Activated naive CD4-positive, alpha-beta T cell treated with anti-CD3 and anti-CD28 coated beads for 36 hours (primary cell): ENCODE measurements at regions of chr21 and their contacts with region 1.

Region 1: DNA sequence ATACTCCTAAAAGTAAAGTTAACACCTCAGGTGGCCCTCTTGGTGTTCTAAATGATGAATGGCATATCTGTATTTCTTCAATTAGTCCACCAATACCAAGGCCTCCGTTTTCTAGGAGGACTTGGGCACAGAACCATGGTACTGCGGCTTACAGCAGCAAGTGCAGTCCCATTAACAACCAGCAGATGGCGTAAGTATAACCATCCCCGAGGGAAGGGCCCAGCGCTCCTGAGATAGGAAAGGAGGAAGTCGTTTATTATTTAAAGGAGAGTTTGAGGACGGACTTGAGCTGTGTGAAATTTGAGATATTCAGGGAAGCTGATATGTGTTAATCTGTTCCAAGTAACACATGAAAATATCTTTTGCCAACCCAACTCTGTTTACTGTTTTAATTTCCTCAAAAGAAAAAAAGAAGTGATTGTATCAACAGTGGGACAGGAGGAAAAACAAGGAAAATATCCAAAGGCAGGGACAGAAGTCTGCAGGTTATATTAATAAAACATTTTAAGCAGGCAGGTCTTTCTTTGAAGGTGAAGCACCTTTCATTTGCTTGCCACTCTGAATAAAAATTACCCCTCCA is 37.7 kb upstream of the KCNJ15 start:
- DNase-seq: peak; percentile 78
- H3K4me3 Mint-ChIP-seq: no peak overlapping the region
- H3K27ac Mint-ChIP-seq: no peak overlapping the region
- H3K4me1 Mint-ChIP-seq: peaks cover 3% of the 10 kb centered on the region
- H3K27me3 Mint-ChIP-seq: no peaks in the 10 kb centered on the region

Region 2: DNA sequence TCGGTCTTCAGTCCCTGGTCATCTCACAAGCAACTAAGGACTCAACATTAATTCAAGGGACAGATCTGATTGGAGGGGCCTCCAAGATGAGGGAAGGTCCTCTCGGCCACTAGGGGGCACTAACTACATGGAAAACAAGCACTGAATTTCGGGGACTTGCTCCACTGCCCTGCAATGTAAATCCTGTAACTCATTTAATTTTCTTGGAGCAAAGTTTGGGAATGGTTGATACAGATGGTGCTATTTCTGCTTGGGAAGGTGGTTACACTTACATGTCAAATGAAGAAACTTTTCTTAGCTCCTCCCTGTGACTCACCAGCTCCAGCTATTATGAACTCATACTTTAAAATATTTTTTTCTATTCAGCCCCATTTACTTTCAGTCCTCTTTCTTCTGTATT is 59.8 kb before region 1 on chr21:
- CTCF ChIA-PET with region 1: interaction called, 6 read pairs
- intact Hi-C with region 1: loop called (anchors 1 kb)
- DNase-seq: peak; percentile 76
- H3K4me3 Mint-ChIP-seq: no peak overlapping the region
- H3K27ac Mint-ChIP-seq: no peak overlapping the region
- H3K4me1 Mint-ChIP-seq: no peaks in the 10 kb centered on the region
- H3K27me3 Mint-ChIP-seq: peaks cover 16% of the 10 kb centered on the region

Region 3: GRCh38 chr21:38208118-38208517 is 11.0 kb before region 1 on chr21:
- CTCF ChIA-PET with region 1: interaction called, 20 read pairs
- intact Hi-C with region 1: no loop called
- DNase-seq: no peak
- H3K4me3 Mint-ChIP-seq: no peak overlapping the region
- H3K27ac Mint-ChIP-seq: no peak overlapping the region
- H3K4me1 Mint-ChIP-seq: peaks cover 4% of the 10 kb centered on the region
- H3K27me3 Mint-ChIP-seq: peaks cover 15% of the 10 kb centered on the region

Region 4: GRCh38 chr21:38236232-38236631 is 17.1 kb after region 1 on chr21:
- CTCF ChIA-PET with region 1: interaction called, 34 read pairs
- intact Hi-C with region 1: no loop called
- DNase-seq: no peak
- H3K4me3 Mint-ChIP-seq: no peak overlapping the region
- H3K27ac Mint-ChIP-seq: no peak overlapping the region
- H3K4me1 Mint-ChIP-seq: no peaks in the 10 kb centered on the region
- H3K27me3 Mint-ChIP-seq: no peaks in the 10 kb centered on the region

Region 5: GRCh38 chr21:38297194-38297631 is 78.1 kb after region 1 on chr21:
- CTCF ChIA-PET with region 1: interaction called, 10 read pairs
- intact Hi-C with region 1: no loop called
- DNase-seq: no peak
- H3K4me3 Mint-ChIP-seq: no peak overlapping the region
- H3K27ac Mint-ChIP-seq: no peak overlapping the region
- H3K4me1 Mint-ChIP-seq: peaks cover 74% of the 10 kb centered on the region
- H3K27me3 Mint-ChIP-seq: no peaks in the 10 kb centered on the region

Region 6: DNA sequence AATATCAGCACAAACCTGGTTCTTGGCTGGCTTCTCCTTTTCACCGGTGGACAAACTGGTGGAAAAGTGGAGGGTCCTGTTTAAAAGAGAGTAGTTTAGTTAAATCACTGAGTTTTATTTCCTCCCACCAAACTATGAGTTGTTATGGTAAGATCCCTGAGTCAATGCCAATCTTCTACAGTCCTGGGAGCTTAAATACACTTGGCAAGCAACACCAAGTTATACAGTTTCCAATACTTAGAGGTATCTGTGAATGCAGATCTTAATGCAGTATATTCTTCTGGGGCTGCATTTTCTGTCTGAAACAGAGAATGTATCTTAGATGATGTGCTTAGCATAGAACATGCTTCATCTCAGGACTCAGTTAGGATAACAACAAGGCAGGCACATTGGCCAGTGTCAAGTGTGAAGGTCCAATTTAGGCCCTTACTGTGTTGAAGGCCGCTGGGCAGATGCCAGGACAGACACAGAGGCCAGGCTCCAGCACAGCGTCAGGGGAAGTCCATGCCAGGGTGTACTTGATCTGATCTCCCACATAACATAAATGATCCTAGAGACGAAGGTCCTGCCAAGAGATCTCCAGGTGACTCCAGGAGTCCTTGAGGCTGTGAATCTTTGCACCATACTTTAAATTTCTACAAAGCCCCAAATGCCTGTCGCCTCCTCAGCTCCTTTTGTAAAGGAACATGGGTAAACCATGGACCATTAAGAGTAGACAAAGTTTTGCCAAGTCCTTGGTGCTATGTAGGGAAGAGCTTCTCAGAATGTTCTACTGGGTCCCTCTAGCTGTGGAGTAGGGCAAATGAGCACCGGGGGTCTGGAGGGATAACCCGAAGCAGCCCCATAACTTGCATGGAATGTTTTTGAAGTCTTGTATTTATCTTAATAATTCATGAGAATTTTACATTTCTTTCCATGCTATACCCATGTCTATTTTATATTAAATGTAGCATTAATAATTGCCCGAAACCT is 114.4 kb after region 1 on chr21:
- CTCF ChIA-PET with region 1: interaction called, 5 read pairs
- intact Hi-C with region 1: loop called (anchors 1 kb)
- DNase-seq: no peak
- H3K4me3 Mint-ChIP-seq: no peak overlapping the region
- H3K27ac Mint-ChIP-seq: no peak overlapping the region
- H3K4me1 Mint-ChIP-seq: no peaks in the 10 kb centered on the region
- H3K27me3 Mint-ChIP-seq: no peaks in the 10 kb centered on the region